Endothelial cell of umbilical vein (primary cell): ENCODE measurements at regions of chr4 and their contacts with region 1.

Region 1: DNA sequence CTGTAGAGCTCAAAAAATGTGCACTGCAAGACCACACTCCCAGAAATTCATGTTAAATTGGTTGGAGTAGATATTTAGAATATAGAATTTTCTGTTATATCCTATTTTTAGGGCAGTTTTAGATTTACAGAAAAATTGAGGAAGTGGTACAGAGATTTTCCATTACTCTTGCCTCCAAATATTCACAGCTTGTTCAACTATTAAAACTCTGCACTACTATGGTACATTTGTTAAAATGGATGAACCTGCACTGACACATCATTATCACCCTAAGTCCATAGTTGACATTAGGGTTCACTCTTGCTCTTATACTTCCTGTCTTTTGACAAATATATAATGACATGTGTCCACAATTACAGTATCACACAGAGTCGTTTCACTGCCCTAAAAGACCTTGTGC is 1724.5 kb downstream of the C4orf33 start:
- DNase-seq: no peak
- H3K4me3 ChIP-seq: no peak overlapping the region
- H3K27ac ChIP-seq: no peak overlapping the region
- H3K4me1 ChIP-seq: no peaks in the 10 kb centered on the region
- H3K27me3 ChIP-seq: no peaks in the 10 kb centered on the region
- CTCF ChIP-seq: no peak
- POLR2A ChIP-seq: no peak

Region 2: DNA sequence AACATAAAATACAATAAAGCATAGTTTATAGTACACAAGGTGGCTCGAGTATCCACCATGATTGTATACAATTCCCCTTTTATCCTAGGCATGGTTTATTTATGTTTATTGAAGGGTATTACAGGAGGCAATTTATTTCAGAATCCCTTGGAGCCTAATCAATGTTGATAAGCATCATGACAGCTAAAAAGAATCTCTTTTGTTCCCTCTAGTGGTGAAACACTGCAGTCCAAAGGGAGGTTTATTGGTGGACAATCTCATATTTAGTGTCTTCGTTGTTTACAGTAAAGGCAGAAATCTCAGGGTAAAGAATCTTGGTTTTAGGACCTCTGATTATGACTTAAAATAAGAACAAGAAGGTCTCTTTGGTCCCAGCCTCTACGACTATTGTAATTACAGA is 12.0 kb before region 1 on chr4:
- CTCF ChIA-PET with region 1: interaction called, 19 read pairs
- POLR2A ChIA-PET with region 1: no interaction called
- dilution Hi-C with region 1: no loop called
- intact Hi-C with region 1: no loop called
- DNase-seq: peak; percentile 41
- H3K4me3 ChIP-seq: no peak overlapping the region
- H3K27ac ChIP-seq: no peak overlapping the region
- H3K4me1 ChIP-seq: no peaks in the 10 kb centered on the region
- H3K27me3 ChIP-seq: no peaks in the 10 kb centered on the region
- CTCF ChIP-seq: peak; percentile 39 to 40
- POLR2A ChIP-seq: no peak

Region 3: DNA sequence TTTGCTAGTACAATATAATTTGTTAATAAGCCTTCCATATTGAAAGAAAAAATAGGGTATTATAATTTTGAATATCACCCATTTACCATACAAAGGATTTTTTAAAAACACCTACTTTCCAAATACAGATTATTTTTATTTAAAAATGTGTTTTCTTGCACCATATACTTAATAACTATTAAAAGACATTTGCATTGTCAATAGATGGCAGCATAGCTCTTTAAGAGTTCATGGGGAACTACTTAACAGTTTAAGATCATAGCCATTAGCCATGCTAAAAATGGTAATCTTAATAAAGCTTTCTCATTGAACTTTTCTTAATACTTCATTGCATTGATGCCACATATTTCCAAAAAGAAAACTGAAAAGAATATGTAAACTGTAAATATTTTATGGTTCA is 271.4 kb after region 1 on chr4:
- CTCF ChIA-PET with region 1: no interaction called
- POLR2A ChIA-PET with region 1: no interaction called
- dilution Hi-C with region 1: no loop called
- intact Hi-C with region 1: no loop called
- DNase-seq: peak; percentile 43
- H3K4me3 ChIP-seq: no peak overlapping the region
- H3K27ac ChIP-seq: no peak overlapping the region
- H3K4me1 ChIP-seq: no peaks in the 10 kb centered on the region
- H3K27me3 ChIP-seq: no peaks in the 10 kb centered on the region
- CTCF ChIP-seq: no peak
- POLR2A ChIP-seq: no peak